HCT116 (cell line): ENCODE measurements at regions of chr1 and their contacts with region 1.

Region 1: DNA sequence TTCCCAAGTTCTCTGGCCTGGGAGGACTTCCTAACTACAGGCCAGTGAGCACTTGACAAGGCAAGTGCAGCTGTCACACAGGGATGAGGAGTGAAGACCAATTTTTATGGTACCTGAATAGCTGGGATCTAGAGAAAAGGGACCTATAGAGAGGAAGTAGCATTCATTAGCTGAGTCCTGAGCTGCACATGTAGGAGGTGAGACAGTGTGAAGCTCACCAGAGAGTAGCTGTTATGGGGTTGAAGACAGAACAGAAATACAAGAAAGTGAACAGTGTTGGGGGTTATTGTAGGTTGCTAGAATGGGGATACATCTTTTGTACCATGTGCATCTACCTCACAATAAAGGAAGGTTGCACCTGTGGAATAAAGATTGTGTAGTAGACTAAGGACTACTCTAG is 37.7 kb upstream of the PYHIN1 start:
- DNase-seq: no peak
- ATAC-seq: no peak
- H3K4me3 ChIP-seq: no peak overlapping the region
- H3K27ac ChIP-seq: no peak overlapping the region
- H3K4me1 ChIP-seq: no peaks in the 10 kb centered on the region
- H3K27me3 ChIP-seq: no peaks in the 10 kb centered on the region
- CTCF ChIP-seq: no peak
- POLR2A ChIP-seq: no peak
- RAD21 ChIP-seq: no peak

Region 2: GRCh38 chr1:158819461-158820443 is 73.9 kb before region 1 on chr1:
- CTCF ChIA-PET with region 1: no interaction called
- POLR2A ChIA-PET with region 1: no interaction called
- RAD21 ChIA-PET with region 1: no interaction called
- intact Hi-C with region 1: no loop called
- DNase-seq: no peak
- ATAC-seq: no peak
- H3K4me3 ChIP-seq: no peak overlapping the region
- H3K27ac ChIP-seq: no peak overlapping the region
- H3K4me1 ChIP-seq: no peaks in the 10 kb centered on the region
- H3K27me3 ChIP-seq: no peaks in the 10 kb centered on the region
- CTCF ChIP-seq: no peak
- POLR2A ChIP-seq: no peak
- RAD21 ChIP-seq: no peak

Region 3: DNA sequence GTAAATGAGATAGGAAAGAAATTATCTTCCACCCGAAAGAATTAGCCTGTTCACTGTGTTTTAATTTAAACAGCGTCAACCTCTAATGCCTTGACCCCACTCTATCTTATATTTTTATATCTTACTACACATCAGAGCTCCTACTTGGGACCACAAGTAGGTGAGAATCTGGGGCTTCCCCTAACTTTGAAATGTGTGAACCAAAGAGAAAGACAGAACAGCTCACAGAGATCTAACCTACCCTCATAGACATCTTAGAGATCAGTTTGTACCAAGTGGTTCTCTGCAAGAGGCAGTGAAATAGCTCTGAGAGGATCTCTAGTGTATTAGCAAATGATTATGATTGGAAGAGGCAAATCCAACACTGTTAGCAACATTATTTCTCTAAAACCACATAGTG is 85.1 kb after region 1 on chr1:
- CTCF ChIA-PET with region 1: no interaction called
- POLR2A ChIA-PET with region 1: no interaction called
- RAD21 ChIA-PET with region 1: no interaction called
- intact Hi-C with region 1: loop called (anchors 5 kb)
- DNase-seq: no peak
- ATAC-seq: no peak
- H3K4me3 ChIP-seq: no peak overlapping the region
- H3K27ac ChIP-seq: no peak overlapping the region
- H3K4me1 ChIP-seq: no peaks in the 10 kb centered on the region
- H3K27me3 ChIP-seq: no peaks in the 10 kb centered on the region
- CTCF ChIP-seq: no peak
- POLR2A ChIP-seq: no peak
- RAD21 ChIP-seq: no peak